Esophagus muscularis mucosa (tissue), 4 donors: ENCODE measurements at regions of chr5 and their contacts with region 1.

Region 1: GRCh38 chr5:40688127-40688761 is 8.5 kb downstream of the PTGER4 start:
- DNase-seq: peak; percentile 95
- H3K4me3 ChIP-seq: peak overlapping the region in 1 of 4 donors; percentile 1
- H3K27ac ChIP-seq: peak overlapping the region in 3 of 4 donors; percentile 21 to 86 (median 55)
- H3K4me1 ChIP-seq: peaks cover 14 to 60% (median 52%) of the 10 kb centered on the region in 4 donors
- H3K27me3 ChIP-seq: no peaks in the 10 kb centered on the region
- CTCF ChIP-seq: peak; percentile 85 to 88 (median 86)
- EP300 ChIP-seq: no peak
- POLR2A ChIP-seq: no peak

Region 2: DNA sequence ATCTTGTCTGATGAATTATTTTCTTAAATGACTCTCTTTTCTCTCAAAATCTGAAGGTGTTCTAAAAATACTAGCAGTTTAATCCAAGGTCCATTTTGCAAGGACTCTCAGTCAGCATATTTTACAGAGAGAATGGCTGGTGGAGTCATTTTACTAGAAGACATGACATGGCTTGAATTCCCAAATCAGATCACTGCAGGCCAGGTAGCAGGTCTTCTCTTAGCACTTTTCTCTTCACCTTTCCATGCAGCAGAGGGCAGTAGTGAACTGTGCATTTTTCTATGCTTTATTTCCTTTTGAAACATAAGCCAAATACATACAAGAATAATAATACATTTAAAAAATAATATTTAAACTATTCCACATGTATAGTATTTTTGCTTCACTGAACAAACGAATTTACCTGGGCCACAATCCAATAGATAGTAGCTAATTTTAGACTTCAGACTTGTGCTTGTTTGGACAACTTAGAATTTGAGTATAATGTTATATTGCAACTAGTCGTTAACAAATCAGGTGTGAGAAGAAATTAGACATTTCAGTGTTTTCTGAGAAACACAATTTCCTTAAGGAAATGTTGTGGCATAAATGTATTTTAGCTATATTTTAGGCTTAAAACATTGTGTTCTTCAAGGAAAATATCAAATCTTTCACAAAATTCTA is 974.1 kb before region 1 on chr5:
- intact Hi-C with region 1: loop called (anchors 5 kb)
- DNase-seq: no peak
- H3K4me3 ChIP-seq: no peak overlapping the region
- H3K27ac ChIP-seq: no peak overlapping the region
- H3K4me1 ChIP-seq: no peaks in the 10 kb centered on the region
- H3K27me3 ChIP-seq: no peaks in the 10 kb centered on the region
- CTCF ChIP-seq: peak; percentile 58 to 66 (median 60)
- EP300 ChIP-seq: no peak
- POLR2A ChIP-seq: no peak

Region 3: GRCh38 chr5:39948867-39949468 is 739.3 kb before region 1 on chr5:
- intact Hi-C with region 1: loop called (anchors 2 kb)
- DNase-seq: no peak
- H3K4me3 ChIP-seq: no peak overlapping the region
- H3K27ac ChIP-seq: no peak overlapping the region
- H3K4me1 ChIP-seq: no peaks in the 10 kb centered on the region
- H3K27me3 ChIP-seq: no peaks in the 10 kb centered on the region
- CTCF ChIP-seq: peak; percentile 54 to 65 (median 55)
- EP300 ChIP-seq: no peak
- POLR2A ChIP-seq: no peak